Ascending aorta (tissue), 2 donors: ENCODE measurements at regions of chr3 and their contacts with region 1.

Region 1: DNA sequence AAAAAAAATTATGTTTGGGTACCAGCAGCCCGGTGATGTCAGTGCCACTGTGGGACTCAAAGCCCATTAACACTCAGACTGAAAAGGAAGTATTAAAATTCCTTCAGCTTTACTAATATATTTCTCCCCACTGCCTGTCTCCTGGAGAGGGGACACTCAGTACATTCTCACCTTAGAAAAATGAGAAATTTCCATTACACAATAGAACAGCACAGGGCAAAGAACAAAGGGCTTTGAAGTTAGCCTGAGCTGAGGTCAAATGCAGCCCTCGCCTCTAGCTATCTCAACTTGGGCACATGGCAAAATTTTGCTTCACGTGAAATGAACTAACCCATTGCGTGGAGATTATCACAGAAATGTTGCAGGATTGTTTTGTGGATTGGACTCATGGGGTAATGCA is 80.8 kb downstream of the RARB start:
- DNase-seq: no peak
- H3K4me3 ChIP-seq: no peak overlapping the region
- H3K27ac ChIP-seq: peak overlapping the region; percentile 43 to 87
- H3K4me1 ChIP-seq: peaks cover 0 to 19% of the 10 kb centered on the region in 2 donors
- H3K27me3 ChIP-seq: no peaks in the 10 kb centered on the region
- CTCF ChIP-seq: no peak

Region 2: GRCh38 chr3:25468866-25469319 is 40.0 kb before region 1 on chr3:
- intact Hi-C with region 1: loop called (anchors 5 kb)
- DNase-seq: peak in 1 of 2 donors; percentile 82
- H3K4me3 ChIP-seq: peak overlapping the region in 1 of 2 donors; percentile 8
- H3K27ac ChIP-seq: peak overlapping the region; percentile 59 to 83
- H3K4me1 ChIP-seq: peaks cover 5 to 14% of the 10 kb centered on the region in 2 donors
- H3K27me3 ChIP-seq: no peaks in the 10 kb centered on the region
- CTCF ChIP-seq: peak; percentile 9 to 16 (median 16)